Calu3 (cell line): ENCODE measurements at regions of chr5 and their contacts with region 1.

Region 1: GRCh38 chr5:102090770-102091381 is 205.2 kb downstream of the SLCO4C1 start:
- DNase-seq: peak; percentile 69
- H3K4me3 Mint-ChIP-seq: no peak overlapping the region
- H3K27ac Mint-ChIP-seq: no peak overlapping the region
- H3K4me1 Mint-ChIP-seq: peaks cover under 1% of the 10 kb centered on the region
- H3K27me3 Mint-ChIP-seq: no peaks in the 10 kb centered on the region
- CTCF ChIP-seq: peak; percentile 69

Region 2: DNA sequence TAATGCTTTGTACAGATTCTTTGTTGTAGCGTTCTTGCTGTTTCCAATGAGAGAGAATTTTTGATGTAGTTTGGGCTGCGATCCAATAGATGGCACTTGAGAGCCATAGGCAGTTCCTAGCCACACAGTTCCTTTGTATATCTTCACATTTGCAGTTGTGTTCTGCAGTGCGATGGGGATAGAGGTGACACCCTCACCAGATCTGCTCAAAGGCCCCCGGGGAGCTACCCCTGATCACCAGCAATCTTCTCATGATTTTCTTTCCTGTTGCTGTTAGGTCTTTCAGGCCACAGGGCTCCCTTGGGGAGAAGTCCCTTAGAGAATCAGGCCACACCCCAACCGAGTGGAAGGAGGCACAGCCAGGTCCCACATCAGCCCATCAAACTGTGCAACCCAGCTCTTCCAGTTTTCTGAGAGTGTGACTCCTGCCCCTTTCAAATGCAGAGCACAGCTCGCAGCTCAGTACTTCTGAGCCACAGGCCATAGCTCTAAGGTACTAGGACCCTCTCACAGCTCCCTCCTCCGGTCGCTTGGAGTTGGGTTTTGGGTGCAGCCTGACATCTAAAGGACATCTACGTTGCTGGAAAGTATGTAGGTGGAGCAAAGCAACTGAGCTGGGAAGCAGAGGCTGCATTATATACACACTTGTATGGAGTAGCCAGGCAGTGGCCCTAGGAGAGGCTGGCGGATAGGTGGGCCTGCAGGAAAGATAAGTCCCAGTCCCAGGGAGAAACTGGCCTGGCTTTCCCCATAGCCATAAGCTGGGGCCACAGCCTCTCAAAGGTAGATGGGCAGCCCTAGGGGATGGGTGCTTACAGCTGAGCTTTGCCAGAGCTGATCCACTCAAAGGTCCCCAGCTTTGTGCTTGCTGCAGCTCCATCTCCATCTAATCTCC is 148.3 kb before region 1 on chr5:
- CTCF ChIA-PET with region 1: interaction called, 7 read pairs
- intact Hi-C with region 1: loop called (anchors 1 kb)
- DNase-seq: peak; percentile 56
- H3K4me3 Mint-ChIP-seq: no peak overlapping the region
- H3K27ac Mint-ChIP-seq: no peak overlapping the region
- H3K4me1 Mint-ChIP-seq: peaks cover 10% of the 10 kb centered on the region
- H3K27me3 Mint-ChIP-seq: no peaks in the 10 kb centered on the region
- CTCF ChIP-seq: peak; percentile 73

Region 3: GRCh38 chr5:101977729-101978345 is 113.0 kb before region 1 on chr5:
- CTCF ChIA-PET with region 1: no interaction called
- intact Hi-C with region 1: loop called (anchors 2 kb)
- DNase-seq: peak; percentile 20
- H3K4me3 Mint-ChIP-seq: no peak overlapping the region
- H3K27ac Mint-ChIP-seq: no peak overlapping the region
- H3K4me1 Mint-ChIP-seq: peaks cover 7% of the 10 kb centered on the region
- H3K27me3 Mint-ChIP-seq: no peaks in the 10 kb centered on the region
- CTCF ChIP-seq: peak; percentile 64

Region 4: GRCh38 chr5:101995585-101995984 is 95.3 kb before region 1 on chr5:
- CTCF ChIA-PET with region 1: interaction called, 3 read pairs
- intact Hi-C with region 1: loop called (anchors 1 kb)
- DNase-seq: peak; percentile 57
- H3K4me3 Mint-ChIP-seq: peak overlapping the region; percentile 25
- H3K27ac Mint-ChIP-seq: peak overlapping the region; percentile 74
- H3K4me1 Mint-ChIP-seq: peaks cover 31% of the 10 kb centered on the region
- H3K27me3 Mint-ChIP-seq: no peaks in the 10 kb centered on the region
- CTCF ChIP-seq: no peak

Region 5: DNA sequence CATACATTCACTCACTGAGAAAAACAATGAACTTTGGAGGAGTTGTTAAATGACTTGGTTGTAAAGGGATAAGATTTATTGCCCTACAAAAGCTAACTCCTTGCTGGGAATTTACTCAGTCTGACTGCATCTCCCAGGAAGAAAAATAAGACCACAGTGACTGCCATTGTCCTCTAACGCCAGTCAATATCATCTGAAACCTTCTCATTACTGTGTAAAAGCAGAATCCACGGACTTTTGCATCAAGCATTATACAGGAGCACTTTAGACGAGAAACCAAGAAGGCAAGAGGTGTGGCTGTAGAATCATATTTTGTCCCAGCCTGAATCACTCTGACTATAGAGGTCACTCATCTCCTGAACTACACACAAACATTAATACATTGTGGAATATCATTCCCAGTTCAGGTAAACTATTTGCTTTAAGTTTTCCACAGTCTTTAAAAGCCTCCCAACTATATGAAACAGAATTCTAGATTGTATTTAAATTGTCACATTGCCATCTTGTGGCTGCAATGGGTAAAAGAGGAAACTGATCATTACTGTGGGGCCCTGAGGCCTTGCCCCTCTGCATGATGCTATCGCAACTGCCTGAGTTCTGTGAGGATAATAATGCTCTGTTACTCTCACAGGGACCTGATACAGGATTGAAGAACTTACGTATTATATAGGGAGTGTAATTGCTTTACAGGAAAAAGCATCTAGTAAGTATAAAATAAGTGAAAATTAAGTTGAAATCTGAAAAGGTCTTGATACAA is 62.3 kb after region 1 on chr5:
- CTCF ChIA-PET with region 1: no interaction called
- intact Hi-C with region 1: loop called (anchors 2 kb)
- DNase-seq: peak; percentile 41
- H3K4me3 Mint-ChIP-seq: no peak overlapping the region
- H3K27ac Mint-ChIP-seq: no peak overlapping the region
- H3K4me1 Mint-ChIP-seq: peaks cover 14% of the 10 kb centered on the region
- H3K27me3 Mint-ChIP-seq: no peaks in the 10 kb centered on the region
- CTCF ChIP-seq: peak; percentile 58